Mammary epithelial cell (primary cell): ENCODE measurements at regions of chr19 and their contacts with region 1.

Region 1: GRCh38 chr19:50181121-50181520 is 18.0 kb upstream of the IZUMO2 start:
- DNase-seq: no peak
- H3K4me3 ChIP-seq: no peak overlapping the region
- H3K27ac ChIP-seq: no peak overlapping the region
- H3K4me1 ChIP-seq: no peaks in the 10 kb centered on the region
- H3K27me3 ChIP-seq: no peaks in the 10 kb centered on the region
- CTCF ChIP-seq: no peak

Region 2: DNA sequence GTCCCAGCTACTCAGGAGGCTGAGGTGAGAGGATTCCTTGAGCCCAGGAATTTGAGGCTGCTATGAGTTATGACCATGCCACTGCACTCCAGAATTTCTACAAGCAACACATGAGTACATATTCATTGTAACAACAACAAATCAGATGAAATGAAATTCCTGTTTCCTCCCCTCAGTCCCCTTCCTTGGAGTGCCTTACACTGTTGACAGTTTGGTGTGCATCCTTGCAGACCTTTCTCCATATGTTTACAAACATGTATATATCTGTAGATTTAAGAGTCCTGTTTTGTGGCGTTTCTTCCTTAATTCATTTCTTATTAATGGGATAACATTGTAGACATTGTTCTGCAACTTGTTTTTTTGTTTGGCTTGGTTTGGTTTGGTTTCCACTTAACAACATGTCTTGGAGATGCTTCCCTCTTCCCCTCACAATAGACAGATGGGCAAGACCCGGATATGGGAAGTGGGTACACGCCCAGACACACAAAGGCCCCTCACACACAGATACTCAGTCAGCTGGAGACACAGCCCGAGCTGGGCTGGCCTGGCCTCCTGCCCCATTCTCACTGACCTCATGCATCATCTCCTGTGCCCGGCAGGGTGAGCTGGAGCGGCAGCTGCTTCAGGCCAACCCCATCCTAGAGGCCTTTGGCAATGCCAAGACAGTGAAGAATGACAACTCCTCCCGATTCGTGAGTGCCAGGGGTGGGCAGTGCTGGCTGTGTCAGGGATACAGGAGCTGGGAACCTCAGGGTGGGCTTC is 44.0 kb after region 1 on chr19:
- CTCF ChIA-PET with region 1: no interaction called
- dilution Hi-C with region 1: loop called (anchors 5 kb)
- in situ Hi-C with region 1: no loop called
- intact Hi-C with region 1: no loop called
- DNase-seq: no peak
- H3K4me3 ChIP-seq: no peak overlapping the region
- H3K27ac ChIP-seq: no peak overlapping the region
- H3K4me1 ChIP-seq: no peaks in the 10 kb centered on the region
- H3K27me3 ChIP-seq: no peaks in the 10 kb centered on the region
- CTCF ChIP-seq: no peak

Region 3: DNA sequence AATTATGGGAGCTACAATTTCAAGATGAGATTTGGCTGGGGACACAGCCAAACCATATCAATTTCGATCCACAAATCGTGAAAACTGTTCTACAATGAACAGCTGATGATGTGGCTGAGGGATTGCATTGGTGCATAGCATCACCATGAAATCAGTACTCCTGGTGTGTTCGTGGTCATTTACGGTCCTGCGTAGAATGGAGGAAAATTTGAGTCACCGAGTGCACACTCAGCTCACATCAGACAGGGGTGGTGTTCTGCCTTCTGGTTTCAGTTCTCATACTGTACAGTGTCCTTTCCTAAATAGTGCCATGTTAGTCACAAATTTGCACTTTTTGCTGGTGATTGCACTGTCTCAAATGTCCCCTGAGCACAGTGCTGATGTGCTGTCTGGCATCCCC is 61.5 kb after region 1 on chr19:
- CTCF ChIA-PET with region 1: no interaction called
- dilution Hi-C with region 1: no loop called
- in situ Hi-C with region 1: no loop called
- intact Hi-C with region 1: no loop called
- DNase-seq: no peak
- H3K4me3 ChIP-seq: no peak overlapping the region
- H3K27ac ChIP-seq: no peak overlapping the region
- H3K4me1 ChIP-seq: no peaks in the 10 kb centered on the region
- H3K27me3 ChIP-seq: no peaks in the 10 kb centered on the region
- CTCF ChIP-seq: no peak